Sigmoid colon (tissue), 7 donors: ENCODE measurements at regions of chr10 and their contacts with region 1.

Region 1: GRCh38 chr10:69914398-69915214 is 112.9 kb downstream of the COL13A1 start:
- DNase-seq: peak; percentile 83
- H3K4me3 ChIP-seq: no peak overlapping the region
- H3K27ac ChIP-seq: no peak overlapping the region
- H3K4me1 ChIP-seq: peaks cover 0 to 35% (median 31%) of the 10 kb centered on the region in 4 donors
- H3K27me3 ChIP-seq: peaks cover 0 to 5% (median 0%) of the 10 kb centered on the region in 3 donors
- CTCF ChIP-seq: peak; percentile 76 to 97 (median 90)
- EP300 ChIP-seq: no peak
- POLR2A ChIP-seq: no peak

Region 2: GRCh38 chr10:69629897-69630650 is 284.5 kb before region 1 on chr10 and contains the start of gene FAM241B:
- intact Hi-C with region 1: loop called (anchors 5 kb)
- DNase-seq: peak; percentile 80
- H3K4me3 ChIP-seq: peak within 1 kb of the TSS; percentile 30 to 61 (median 58)
- H3K27ac ChIP-seq: peak within 1 kb of the TSS in 3 of 4 donors; percentile 27 to 38 (median 32)
- H3K4me1 ChIP-seq: peaks cover 2 to 16% (median 14%) of the 10 kb centered on the region in 4 donors
- H3K27me3 ChIP-seq: no peaks in the 10 kb centered on the region
- CTCF ChIP-seq: peak; percentile 90 to 98 (median 94)
- EP300 ChIP-seq: no peak
- POLR2A ChIP-seq: no peak
- total RNA-seq, gene FAM241B: 3.0 to 6.3 (median 3.5) TPM

Region 3: DNA sequence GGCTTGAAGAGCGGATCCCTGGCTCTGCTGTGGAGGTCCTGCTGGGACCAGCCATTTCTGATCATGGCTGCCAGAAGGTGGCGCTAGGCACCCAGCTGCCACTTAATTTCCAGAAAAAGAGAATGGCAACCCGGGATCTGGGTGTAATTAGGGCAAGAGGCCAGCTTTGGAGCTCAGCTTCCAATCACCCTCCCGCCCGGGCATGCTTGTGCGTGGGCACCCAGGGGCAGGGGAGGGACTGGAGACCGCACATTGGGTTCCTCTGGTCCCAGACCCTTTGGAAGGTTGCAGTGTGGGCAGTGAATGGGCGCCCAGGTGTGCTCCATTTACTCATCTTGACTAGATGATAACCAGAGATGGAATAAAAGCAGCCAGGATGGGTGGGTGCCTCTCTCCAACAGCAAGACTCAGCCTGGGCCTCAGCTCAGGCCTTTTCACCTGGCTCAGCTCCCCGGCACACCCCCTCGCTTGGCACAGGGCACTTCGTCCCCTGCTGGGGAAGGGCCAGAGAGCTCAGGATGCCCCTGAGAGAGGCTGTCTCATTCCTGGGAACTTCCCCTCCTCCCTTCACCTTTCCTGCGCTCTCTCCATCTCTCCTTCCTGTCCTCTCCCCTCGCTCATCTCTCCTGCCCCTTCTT is 269.8 kb before region 1 on chr10:
- intact Hi-C with region 1: loop called (anchors 2 kb)
- DNase-seq: peak; percentile 65
- H3K4me3 ChIP-seq: no peak overlapping the region
- H3K27ac ChIP-seq: no peak overlapping the region
- H3K4me1 ChIP-seq: no peaks in the 10 kb centered on the region
- H3K27me3 ChIP-seq: peaks cover 0 to 4% (median 0%) of the 10 kb centered on the region in 3 donors
- CTCF ChIP-seq: peak; percentile 26 to 77 (median 72)
- EP300 ChIP-seq: no peak
- POLR2A ChIP-seq: no peak

Region 4: GRCh38 chr10:69696073-69696731 is 218.4 kb before region 1 on chr10:
- intact Hi-C with region 1: loop called (anchors 5 kb)
- DNase-seq: peak; percentile 18
- H3K4me3 ChIP-seq: no peak overlapping the region
- H3K27ac ChIP-seq: no peak overlapping the region
- H3K4me1 ChIP-seq: no peaks in the 10 kb centered on the region
- H3K27me3 ChIP-seq: no peaks in the 10 kb centered on the region
- CTCF ChIP-seq: no peak
- EP300 ChIP-seq: no peak
- POLR2A ChIP-seq: no peak

Region 5: GRCh38 chr10:69789133-69789576 is 125.5 kb before region 1 on chr10:
- intact Hi-C with region 1: loop called (anchors 2 kb)
- DNase-seq: no peak
- H3K4me3 ChIP-seq: no peak overlapping the region
- H3K27ac ChIP-seq: peak overlapping the region in 3 of 4 donors; percentile 28 to 42 (median 40)
- H3K4me1 ChIP-seq: peaks cover 0 to 13% (median 6%) of the 10 kb centered on the region in 4 donors
- H3K27me3 ChIP-seq: no peaks in the 10 kb centered on the region
- CTCF ChIP-seq: peak; percentile 14 to 54 (median 30)
- EP300 ChIP-seq: no peak
- POLR2A ChIP-seq: no peak

Region 6: DNA sequence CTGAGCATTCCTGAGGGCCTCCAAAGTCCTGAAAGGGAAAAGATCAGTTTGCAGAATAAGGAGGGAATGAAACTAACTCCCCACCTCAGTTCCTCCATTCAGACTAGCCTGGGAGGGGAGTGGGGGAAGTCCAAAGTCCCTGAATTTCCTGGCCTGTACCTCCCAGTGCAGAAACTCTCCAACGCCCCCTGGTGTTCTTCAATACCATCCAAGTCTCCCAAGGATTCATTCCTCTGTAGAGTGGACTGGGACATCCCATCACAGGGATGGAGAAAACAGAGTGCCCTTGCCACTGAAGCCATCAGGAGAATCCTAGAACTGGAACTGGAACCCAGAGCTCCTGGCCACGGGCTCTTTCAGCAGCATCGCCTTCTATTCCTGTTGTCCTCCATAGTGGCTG is 114.5 kb before region 1 on chr10:
- intact Hi-C with region 1: loop called (anchors 5 kb)
- DNase-seq: no peak
- H3K4me3 ChIP-seq: no peak overlapping the region
- H3K27ac ChIP-seq: no peak overlapping the region
- H3K4me1 ChIP-seq: peaks cover 0 to 26% (median 21%) of the 10 kb centered on the region in 4 donors
- H3K27me3 ChIP-seq: peaks cover 0 to 26% (median 21%) of the 10 kb centered on the region in 3 donors
- CTCF ChIP-seq: peak in 2 of 4 experiments; percentile 17 to 42
- EP300 ChIP-seq: no peak
- POLR2A ChIP-seq: no peak

Region 7: DNA sequence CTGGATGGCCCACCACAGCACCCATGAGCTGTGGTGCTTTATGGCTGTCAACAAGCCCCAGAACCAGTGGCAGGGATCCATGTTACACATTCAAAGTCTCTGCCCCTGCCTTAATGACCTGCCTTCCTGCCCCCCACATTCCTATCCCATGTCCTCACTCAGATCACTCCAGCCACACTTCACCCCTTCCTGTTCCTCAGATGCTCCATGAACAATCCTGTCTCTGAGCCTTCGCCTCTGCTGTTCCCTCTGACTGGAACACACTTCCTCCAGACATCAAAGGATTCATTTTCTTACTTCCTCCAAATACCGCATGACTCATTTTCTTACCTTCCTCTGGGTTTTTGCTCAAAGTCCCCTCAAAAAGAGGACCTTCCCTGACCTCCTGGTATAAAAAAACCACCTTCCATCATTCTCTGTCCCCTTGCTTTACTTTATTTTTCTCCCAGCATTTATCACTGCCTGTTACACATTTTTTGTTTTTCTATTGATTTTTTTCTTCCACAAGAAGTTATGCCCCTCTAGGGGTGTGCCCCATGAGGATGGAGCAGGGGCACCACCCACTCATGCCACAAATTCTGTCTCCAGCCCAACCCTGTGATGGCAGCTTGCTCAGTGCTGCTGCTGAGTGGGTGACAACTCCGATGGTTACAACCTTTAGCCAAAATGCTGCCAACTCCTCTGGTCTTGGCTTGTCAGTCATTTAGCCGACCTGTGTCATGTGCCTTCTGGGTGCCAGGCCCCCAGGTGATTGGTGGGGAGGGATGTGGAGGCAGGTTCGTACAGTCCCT is 94.7 kb before region 1 on chr10:
- intact Hi-C with region 1: no loop called
- DNase-seq: no peak
- H3K4me3 ChIP-seq: no peak overlapping the region
- H3K27ac ChIP-seq: no peak overlapping the region
- H3K4me1 ChIP-seq: no peaks in the 10 kb centered on the region
- H3K27me3 ChIP-seq: no peaks in the 10 kb centered on the region
- CTCF ChIP-seq: no peak
- EP300 ChIP-seq: no peak
- POLR2A ChIP-seq: no peak

Region 8: GRCh38 chr10:69855346-69856111 is 59.1 kb before region 1 on chr10:
- intact Hi-C with region 1: loop called (anchors 5 kb)
- DNase-seq: no peak
- H3K4me3 ChIP-seq: no peak overlapping the region
- H3K27ac ChIP-seq: no peak overlapping the region
- H3K4me1 ChIP-seq: peaks cover 0 to 13% (median 0%) of the 10 kb centered on the region in 4 donors
- H3K27me3 ChIP-seq: no peaks in the 10 kb centered on the region
- CTCF ChIP-seq: no peak
- EP300 ChIP-seq: no peak
- POLR2A ChIP-seq: no peak